ENCODE measurements at regions of chr1 and their contacts with region 1.

Region 1: GRCh38 chr1:39672551-39672947 is 642 bp upstream of the NT5C1A start:
- DNase-seq: no peak
- H3K4me3 ChIP-seq: no peak overlapping the region
- H3K27ac ChIP-seq: no peak overlapping the region
- H3K4me1 ChIP-seq: peaks cover 18% of the 10 kb centered on the region
- H3K27me3 ChIP-seq: peaks cover 19% of the 10 kb centered on the region
- CTCF ChIP-seq: peak in 1 of 2 donors; percentile 11

Region 2: GRCh38 chr1:38451541-38451993 is 1221.0 kb before region 1 on chr1:
- CTCF ChIA-PET with region 1: no interaction called
- dilution Hi-C with region 1: no loop called
- in situ Hi-C with region 1: no loop called
- intact Hi-C with region 1: no loop called
- DNase-seq: no peak
- H3K4me3 ChIP-seq: no peak overlapping the region
- H3K27ac ChIP-seq: no peak overlapping the region
- H3K4me1 ChIP-seq: no peaks in the 10 kb centered on the region
- H3K27me3 ChIP-seq: no peaks in the 10 kb centered on the region
- CTCF ChIP-seq: no peak

Region 3: DNA sequence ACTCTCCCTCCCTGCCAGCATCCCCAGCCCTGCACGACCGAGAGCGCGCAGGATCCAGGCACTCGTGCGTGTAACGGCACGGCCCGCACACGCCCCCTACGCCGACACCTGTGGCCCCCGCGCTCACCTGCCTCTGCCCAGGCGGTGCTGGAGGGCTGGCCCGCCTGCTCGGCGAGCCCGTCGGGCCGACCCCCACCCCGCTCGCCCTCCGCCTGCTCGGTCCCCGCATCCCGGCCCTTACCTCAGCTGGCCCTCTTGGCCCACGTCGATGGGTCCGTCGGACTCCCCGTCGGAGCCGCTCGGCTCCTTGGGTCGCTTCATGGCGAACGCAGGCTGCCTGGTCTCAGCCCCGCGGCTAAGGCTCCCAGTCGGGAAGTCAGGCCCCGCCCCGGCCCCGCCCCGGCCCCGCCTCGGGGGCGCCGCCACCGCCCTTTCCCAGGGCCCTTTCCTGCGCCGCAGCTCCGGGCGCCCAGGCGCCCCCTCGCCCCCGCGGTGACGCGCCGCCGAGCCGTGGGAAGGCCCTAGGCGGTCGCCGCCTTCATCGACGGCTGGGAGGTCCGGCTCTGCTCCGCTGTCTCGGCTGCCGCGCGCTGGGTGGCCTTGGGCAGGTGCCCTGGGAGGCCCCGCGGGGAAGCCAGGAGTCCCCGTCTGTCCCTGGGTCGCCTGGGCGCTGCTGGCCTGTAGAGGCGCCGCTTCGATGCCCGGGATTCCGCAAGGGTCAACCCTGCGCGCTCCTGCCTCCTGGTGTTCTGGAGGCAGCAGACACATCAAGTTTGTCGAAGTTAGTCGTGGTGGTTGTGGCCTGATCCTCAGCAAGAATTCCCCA is 33.0 kb before region 1 on chr1 and contains the start of gene HEYL:
- CTCF ChIA-PET with region 1: no interaction called
- dilution Hi-C with region 1: loop called (anchors 5 kb)
- in situ Hi-C with region 1: no loop called
- intact Hi-C with region 1: no loop called
- DNase-seq: no peak
- H3K4me3 ChIP-seq: no peak within 1 kb of the TSS
- H3K27ac ChIP-seq: no peak within 1 kb of the TSS
- H3K4me1 ChIP-seq: no peaks in the 10 kb centered on the region
- H3K27me3 ChIP-seq: peaks cover 13% of the 10 kb centered on the region
- CTCF ChIP-seq: no peak
- total RNA-seq, gene HEYL: not detected

Region 4: GRCh38 chr1:40951943-40952743 is 1279.6 kb after region 1 on chr1:
- CTCF ChIA-PET with region 1: no interaction called
- dilution Hi-C with region 1: no loop called
- in situ Hi-C with region 1: no loop called
- intact Hi-C with region 1: no loop called
- DNase-seq: peak; percentile 58
- H3K4me3 ChIP-seq: no peak overlapping the region
- H3K27ac ChIP-seq: no peak overlapping the region
- H3K4me1 ChIP-seq: peaks cover 13% of the 10 kb centered on the region
- H3K27me3 ChIP-seq: no peaks in the 10 kb centered on the region
- CTCF ChIP-seq: peak; percentile 92 to 97

Measured in mammary epithelial cell (primary cell).